ENCODE measurements at regions of chr5 and their contacts with region 1.

Region 1: DNA sequence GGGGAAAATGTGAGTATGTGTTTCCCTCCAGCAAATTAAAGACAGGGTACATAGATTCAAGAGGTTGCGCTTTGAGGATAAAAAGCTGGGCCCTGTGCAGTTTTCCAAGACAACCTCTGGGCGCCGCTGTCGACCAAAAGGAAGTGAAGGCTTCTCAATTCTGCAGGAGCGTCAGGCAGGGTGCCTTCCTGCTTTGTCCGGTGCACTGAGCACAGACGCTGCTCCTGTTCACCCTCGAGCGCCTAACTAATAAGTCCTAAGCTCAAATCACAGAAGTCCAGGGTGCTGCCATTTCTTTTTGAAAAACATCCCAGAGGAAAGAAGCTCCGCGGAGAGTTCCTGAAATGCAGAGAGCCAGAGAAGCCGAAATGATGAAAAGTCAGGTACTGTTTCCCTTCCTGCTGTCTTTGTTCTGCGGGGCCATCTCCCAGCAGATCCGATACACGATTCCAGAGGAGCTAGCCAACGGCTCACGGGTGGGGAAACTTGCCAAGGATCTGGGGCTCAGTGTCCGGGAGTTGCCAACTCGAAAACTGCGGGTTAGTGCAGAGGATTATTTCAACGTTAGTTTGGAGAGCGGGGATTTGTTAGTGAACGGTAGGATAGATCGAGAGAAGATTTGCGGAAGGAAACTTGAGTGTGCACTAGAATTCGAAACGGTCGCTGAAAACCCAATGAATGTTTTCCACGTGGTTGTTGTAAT is at the start of gene PCDHGB1:
- DNase-seq: peak in 1 of 2 donors; percentile 62
- ATAC-seq: no peak
- H3K4me3 ChIP-seq: no peak within 1 kb of the TSS
- H3K27ac ChIP-seq: no peak within 1 kb of the TSS
- H3K4me1 ChIP-seq: no peaks in the 10 kb centered on the region
- H3K27me3 ChIP-seq: no peaks in the 10 kb centered on the region
- total RNA-seq, gene PCDHGB1: 3.5 to 6.5 TPM

Region 2: GRCh38 chr5:141234109-141234667 is 115.9 kb before region 1 on chr5:
- intact Hi-C with region 1: loop called in 1 of 2 experiments (anchors 10 kb)
- DNase-seq: no peak
- ATAC-seq: no peak
- H3K4me3 ChIP-seq: peak overlapping the region in 1 of 2 donors; percentile 30
- H3K27ac ChIP-seq: no peak overlapping the region
- H3K4me1 ChIP-seq: no peaks in the 10 kb centered on the region
- H3K27me3 ChIP-seq: peaks cover 0 to 1% of the 10 kb centered on the region in 2 donors

Region 3: DNA sequence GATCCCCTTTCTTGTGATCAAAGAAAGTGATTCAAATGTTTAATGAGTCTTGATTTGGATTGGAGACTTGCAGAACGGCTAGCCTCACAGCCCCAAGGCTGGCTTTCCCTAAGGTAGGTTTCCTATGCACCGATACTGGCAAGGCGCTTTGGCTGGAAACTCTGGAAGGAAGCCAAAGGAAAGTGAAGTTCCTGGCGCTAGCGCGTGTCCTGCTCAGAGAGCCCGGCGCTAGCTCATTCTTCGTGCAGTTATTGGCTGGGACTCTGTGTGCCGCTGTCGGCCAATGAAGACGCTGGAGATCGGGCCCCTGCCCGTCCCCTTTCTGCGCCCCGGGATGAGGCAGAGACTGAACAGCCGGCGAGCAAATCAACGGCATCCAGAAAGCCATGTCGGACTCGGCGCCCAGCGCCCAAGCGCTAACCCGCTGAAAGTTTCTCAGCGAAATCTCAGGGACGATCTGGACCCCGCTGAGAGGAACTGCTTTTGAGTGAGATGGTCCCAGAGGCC is 125.6 kb after region 1 on chr5 and contains the start of gene PCDHGC3:
- intact Hi-C with region 1: no loop called
- DNase-seq: peak; percentile 95
- ATAC-seq: peak; percentile 96
- H3K4me3 ChIP-seq: peak within 1 kb of the TSS; percentile 6 to 47
- H3K27ac ChIP-seq: peak within 1 kb of the TSS in 1 of 2 donors; percentile 62
- H3K4me1 ChIP-seq: peaks cover 0 to 9% of the 10 kb centered on the region in 2 donors
- H3K27me3 ChIP-seq: no peaks in the 10 kb centered on the region
- total RNA-seq, gene PCDHGC3: 67.3 to 116 TPM